Sciatic nerve (tissue), 2 donors: ENCODE measurements at regions of chr3 and their contacts with region 1.

Region 1: GRCh38 chr3:154252759-154253638 is 71.3 kb downstream of the DHX36 start:
- DNase-seq: peak; percentile 97
- ATAC-seq: peak; percentile 94

Region 2: DNA sequence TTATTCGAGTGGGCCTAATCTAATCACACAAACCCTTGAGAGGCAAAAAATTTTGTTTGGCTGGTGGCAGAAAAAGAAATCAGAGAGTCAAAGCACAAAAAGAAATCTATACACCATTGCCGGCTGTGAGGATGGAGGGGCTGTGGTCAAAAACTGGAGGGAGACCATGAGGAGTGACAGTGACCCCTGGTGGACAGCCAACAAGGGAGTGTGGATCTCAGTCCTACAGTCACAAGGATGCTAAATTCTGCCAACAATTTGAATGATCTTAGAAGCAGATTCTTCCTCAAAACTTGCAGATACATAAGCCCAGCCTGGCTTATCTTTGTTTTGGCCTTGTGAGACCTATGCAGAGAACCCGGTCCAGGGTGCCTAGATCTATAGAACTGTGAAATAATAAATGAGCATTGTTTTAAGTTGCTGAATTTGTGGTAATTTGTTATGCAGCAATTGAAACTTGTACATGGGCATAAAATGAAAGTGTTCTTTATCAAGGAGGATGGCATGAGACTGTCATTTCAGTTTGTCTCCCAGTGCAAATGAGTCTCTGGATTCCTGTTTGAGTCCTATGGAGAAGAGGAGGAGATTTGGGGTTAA is 234.8 kb before region 1 on chr3:
- intact Hi-C with region 1: loop called (anchors 10 kb)
- DNase-seq: no peak
- ATAC-seq: no peak

Region 3: DNA sequence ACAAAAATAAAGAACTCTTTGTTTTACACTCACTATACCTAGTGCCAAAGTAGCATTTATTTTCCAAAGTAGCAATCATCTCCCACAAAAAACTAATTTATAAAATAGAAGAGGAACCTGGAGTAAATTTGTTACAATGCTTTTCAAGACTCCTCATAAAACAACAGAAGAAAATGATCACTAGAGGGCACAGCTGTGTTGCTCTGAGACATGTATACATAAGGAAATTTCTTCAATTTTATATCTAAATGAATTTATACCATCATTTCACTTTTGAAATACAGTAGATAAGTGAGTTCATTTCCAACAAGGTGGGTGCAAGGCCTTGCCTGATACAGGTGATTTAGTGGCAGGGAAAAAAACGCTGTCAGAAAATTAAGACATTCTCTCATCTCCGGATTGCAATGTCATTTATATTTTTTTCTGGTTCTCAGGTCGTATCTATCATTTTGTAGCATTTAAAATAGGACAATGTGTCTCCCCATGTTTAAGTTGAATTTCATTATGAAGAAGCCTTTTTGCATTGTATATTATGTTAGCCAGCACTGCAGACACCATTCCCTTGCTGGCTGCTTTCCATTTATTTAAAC is 157.1 kb before region 1 on chr3:
- intact Hi-C with region 1: loop called (anchors 10 kb)
- DNase-seq: no peak
- ATAC-seq: peak; percentile 36